A673 (cell line): ENCODE measurements at regions of chr11 and their contacts with region 1.

Region 1: DNA sequence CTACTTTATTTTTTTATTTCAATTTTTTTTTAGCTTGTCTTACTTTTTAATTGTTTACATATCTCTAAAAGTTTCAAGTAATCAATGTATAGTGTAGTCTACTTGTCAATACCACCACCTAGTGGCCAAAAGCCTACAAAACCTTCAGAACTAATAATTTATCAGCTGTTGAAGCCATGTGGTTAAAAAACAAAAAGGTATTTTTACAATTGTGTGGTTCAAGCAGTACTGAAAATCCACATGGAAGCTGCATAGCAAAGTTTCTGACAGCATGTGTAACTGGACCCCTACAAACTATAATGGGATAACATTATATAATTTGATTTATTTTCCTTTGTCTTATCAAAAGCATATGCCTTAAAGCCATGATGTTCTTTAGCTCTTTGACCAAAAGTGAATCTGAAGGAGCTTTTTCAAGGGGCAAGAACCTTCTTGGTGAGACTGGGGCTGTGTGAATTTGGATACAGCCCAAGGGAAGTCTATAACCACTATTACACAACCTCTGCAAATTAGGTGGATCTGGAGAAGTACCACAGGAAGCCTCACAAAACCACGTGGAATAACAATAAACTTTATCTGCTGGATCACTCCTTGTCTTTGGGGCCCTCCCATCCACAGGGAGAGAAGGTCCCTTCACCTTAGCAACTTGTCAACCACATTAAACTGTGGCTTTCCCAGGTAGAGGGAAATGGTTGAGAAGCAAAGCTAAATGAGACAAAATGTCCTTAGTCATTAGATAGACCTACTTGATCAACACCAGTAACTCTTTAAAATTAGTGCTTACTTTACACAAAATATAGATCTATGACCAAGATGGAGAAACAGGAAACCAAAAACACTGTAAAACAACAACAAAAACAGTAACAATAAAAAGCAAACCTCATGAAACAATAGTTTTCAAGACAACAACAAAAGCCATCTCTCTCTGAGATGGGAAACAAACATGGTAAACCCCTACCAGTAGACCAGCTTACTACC is 9.9 kb downstream of the NARS2 start:
- DNase-seq: peak; percentile 86
- H3K4me3 ChIP-seq: no peak overlapping the region
- H3K27ac ChIP-seq: peak overlapping the region; percentile 40
- H3K4me1 ChIP-seq: peaks cover 28% of the 10 kb centered on the region
- H3K27me3 ChIP-seq: no peaks in the 10 kb centered on the region
- CTCF ChIP-seq: peak; percentile 87

Region 2: GRCh38 chr11:78000193-78000592 is 564.6 kb before region 1 on chr11:
- CTCF ChIA-PET with region 1: interaction called, 3 read pairs
- POLR2A ChIA-PET with region 1: no interaction called
- intact Hi-C with region 1: loop called (anchors 10 kb)
- DNase-seq: peak; percentile 88
- H3K4me3 ChIP-seq: no peak overlapping the region
- H3K27ac ChIP-seq: no peak overlapping the region
- H3K4me1 ChIP-seq: no peaks in the 10 kb centered on the region
- H3K27me3 ChIP-seq: peaks cover 4% of the 10 kb centered on the region
- CTCF ChIP-seq: peak; percentile 84

Region 3: GRCh38 chr11:78139422-78140391 is 425.1 kb before region 1 on chr11 and contains the start of gene ALG8:
- CTCF ChIA-PET with region 1: interaction called, 3 read pairs
- POLR2A ChIA-PET with region 1: no interaction called
- intact Hi-C with region 1: loop called (anchors 10 kb)
- DNase-seq: peak; percentile 99
- H3K4me3 ChIP-seq: peak within 1 kb of the TSS; percentile 64
- H3K27ac ChIP-seq: peak within 1 kb of the TSS; percentile 77
- H3K4me1 ChIP-seq: no peaks in the 10 kb centered on the region
- H3K27me3 ChIP-seq: no peaks in the 10 kb centered on the region
- CTCF ChIP-seq: no peak
- total RNA-seq, gene ALG8: 112 and 131 TPM in 2 replicates

Region 4: GRCh38 chr11:78228467-78228866 is 336.3 kb before region 1 on chr11:
- CTCF ChIA-PET with region 1: interaction called, 37 read pairs
- POLR2A ChIA-PET with region 1: no interaction called
- intact Hi-C with region 1: loop called (anchors 1 kb)
- DNase-seq: peak; percentile 74
- H3K4me3 ChIP-seq: no peak overlapping the region
- H3K27ac ChIP-seq: no peak overlapping the region
- H3K4me1 ChIP-seq: peaks cover 6% of the 10 kb centered on the region
- H3K27me3 ChIP-seq: no peaks in the 10 kb centered on the region
- CTCF ChIP-seq: peak; percentile 77

Region 5: DNA sequence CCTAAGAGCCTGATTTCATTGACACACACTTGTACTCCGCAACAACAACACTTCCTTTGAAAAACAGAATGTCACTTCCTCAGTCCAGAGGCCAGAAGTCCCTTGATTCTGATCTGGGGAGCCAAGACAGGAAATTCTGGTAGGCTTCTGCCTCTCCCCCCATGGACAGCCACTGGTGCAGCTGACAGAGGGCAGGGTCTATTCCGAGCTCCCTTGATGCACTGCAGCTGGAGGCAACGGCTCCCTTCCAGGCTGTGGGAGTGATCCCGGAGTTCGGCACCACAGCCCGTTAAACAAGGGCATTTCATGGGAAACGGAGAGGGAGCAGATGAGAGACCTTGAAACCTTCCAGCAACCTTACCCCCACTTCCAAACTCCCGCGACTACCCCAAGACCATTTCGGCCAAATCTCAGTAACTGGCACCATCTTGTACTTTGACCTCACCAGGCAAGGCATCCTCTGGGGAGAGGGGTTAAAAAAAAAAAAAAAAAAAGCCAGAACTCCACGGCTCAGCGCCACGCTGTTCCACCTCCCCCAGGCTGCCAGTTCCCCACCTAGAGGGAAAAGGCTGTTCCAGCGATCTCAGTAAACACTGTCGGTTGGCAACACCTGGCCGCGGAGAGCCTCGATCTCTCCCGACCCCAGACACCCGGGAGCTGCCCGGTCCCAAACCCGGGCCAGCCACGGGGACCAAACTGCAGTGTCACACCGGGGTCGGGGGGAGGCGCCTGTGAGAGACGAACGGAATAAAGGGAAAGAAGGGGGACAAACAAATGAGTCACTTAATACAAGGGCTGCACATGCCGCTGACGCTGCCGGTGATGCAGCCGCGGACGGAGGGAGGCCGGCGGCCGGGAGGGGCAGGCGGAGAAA is 148.2 kb before region 1 on chr11:
- CTCF ChIA-PET with region 1: interaction called, 9 read pairs
- POLR2A ChIA-PET with region 1: no interaction called
- intact Hi-C with region 1: loop called (anchors 1 kb)
- DNase-seq: peak; percentile 96
- H3K4me3 ChIP-seq: peak overlapping the region; percentile 75
- H3K27ac ChIP-seq: peak overlapping the region; percentile 54
- H3K4me1 ChIP-seq: peaks cover 50% of the 10 kb centered on the region
- H3K27me3 ChIP-seq: no peaks in the 10 kb centered on the region
- CTCF ChIP-seq: peak; percentile 80

Region 6: GRCh38 chr11:78542007-78542406 is 22.8 kb before region 1 on chr11:
- CTCF ChIA-PET with region 1: no interaction called
- POLR2A ChIA-PET with region 1: no interaction called
- intact Hi-C with region 1: no loop called
- DNase-seq: peak; percentile 23
- H3K4me3 ChIP-seq: no peak overlapping the region
- H3K27ac ChIP-seq: peak overlapping the region; percentile 0
- H3K4me1 ChIP-seq: peaks cover 6% of the 10 kb centered on the region
- H3K27me3 ChIP-seq: no peaks in the 10 kb centered on the region
- CTCF ChIP-seq: no peak

Region 7: GRCh38 chr11:78902771-78903507 is 338.2 kb after region 1 on chr11:
- CTCF ChIA-PET with region 1: no interaction called
- POLR2A ChIA-PET with region 1: no interaction called
- intact Hi-C with region 1: no loop called
- DNase-seq: no peak
- H3K4me3 ChIP-seq: no peak overlapping the region
- H3K27ac ChIP-seq: no peak overlapping the region
- H3K4me1 ChIP-seq: no peaks in the 10 kb centered on the region
- H3K27me3 ChIP-seq: peaks cover 7% of the 10 kb centered on the region
- CTCF ChIP-seq: no peak